Ascending aorta (tissue), 2 donors: ENCODE measurements at regions of chr13 and their contacts with region 1.

Region 1: GRCh38 chr13:114226699-114227323 is 7.9 kb upstream of the CDC16 start:
- DNase-seq: peak; percentile 33 to 93
- H3K4me3 ChIP-seq: no peak overlapping the region
- H3K27ac ChIP-seq: no peak overlapping the region
- H3K4me1 ChIP-seq: no peaks in the 10 kb centered on the region
- H3K27me3 ChIP-seq: no peaks in the 10 kb centered on the region
- CTCF ChIP-seq: peak; percentile 98

Region 2: DNA sequence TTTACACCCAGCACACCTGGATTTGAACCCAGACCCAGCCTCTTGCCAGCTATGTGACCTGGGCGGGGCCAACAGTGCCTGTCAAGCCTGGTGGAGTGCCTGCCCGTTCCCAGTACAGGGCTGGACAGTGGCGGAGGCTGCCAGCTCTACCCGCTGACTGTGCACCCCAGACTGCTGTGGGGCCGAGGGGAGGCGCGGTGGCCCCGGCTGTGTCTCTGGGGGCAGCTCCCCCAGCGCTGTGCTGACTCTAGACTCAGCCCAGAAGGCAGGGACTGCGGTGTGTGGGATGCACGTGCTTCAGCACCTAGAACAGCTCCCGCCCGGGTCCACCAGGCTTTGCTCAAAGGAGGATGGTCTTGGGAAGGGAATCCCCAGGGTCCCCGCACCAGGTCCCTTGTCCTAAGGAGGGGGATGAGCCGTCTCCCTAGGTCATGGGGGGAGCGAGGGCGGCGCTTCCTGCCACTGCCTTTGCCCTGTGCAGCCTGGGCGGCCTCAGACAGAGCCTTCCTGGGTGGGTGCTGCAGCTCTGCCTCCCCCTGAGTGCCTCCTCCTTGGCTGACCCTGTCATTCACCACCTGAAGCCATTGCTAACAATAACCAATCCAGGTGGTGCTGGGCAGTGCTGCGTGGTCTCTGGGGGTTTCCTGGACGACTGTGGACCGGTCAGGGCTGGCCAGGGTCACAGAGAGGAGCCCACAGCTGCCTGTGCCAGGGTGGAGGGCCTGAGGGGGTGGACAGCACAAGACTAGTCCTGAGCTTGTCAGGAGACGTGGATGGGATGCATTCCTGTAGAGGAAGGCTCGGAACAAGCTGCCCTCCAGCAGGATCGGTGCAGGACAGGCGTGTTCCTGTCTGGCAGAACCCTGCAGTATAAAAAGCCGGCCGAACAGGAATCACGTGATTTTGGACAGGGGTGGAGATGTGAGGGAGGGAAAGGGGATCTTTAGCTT is 449.2 kb before region 1 on chr13:
- intact Hi-C with region 1: no loop called
- DNase-seq: no peak
- H3K4me3 ChIP-seq: no peak overlapping the region
- H3K27ac ChIP-seq: no peak overlapping the region
- H3K4me1 ChIP-seq: no peaks in the 10 kb centered on the region
- H3K27me3 ChIP-seq: no peaks in the 10 kb centered on the region
- CTCF ChIP-seq: no peak

Region 3: DNA sequence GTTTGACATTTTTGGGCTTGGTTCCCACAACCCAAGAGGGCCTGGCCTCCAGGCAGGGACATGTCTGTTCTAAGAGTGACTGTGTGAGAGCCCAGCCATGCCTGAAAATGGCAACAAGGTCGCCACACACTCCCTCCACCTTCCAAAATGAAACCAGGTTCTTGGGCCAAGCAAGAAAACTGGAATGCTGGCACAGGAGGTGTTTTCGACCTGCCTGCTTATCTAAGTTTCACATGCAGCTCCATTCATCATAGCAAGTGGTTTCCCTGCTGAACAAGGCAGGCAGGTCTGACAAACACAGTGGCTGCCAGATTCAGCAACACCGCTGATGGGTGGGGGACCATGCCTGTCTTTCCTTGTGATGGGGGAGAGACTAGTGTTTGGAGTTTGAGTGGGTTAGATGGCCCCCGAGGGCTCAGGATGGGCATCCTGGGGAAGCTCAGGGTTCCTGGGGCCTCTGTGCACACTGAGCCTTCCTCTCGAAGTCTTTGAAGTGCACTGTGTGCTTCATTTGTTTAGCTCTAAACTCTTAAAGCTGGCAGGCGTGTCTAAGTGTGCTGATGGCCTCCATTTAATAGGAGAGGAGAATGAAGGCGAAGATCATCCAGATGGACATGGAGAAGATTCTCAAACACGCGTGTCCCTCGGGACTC is 345.1 kb before region 1 on chr13:
- intact Hi-C with region 1: no loop called
- DNase-seq: no peak
- H3K4me3 ChIP-seq: peak overlapping the region in 1 of 2 donors; percentile 17
- H3K27ac ChIP-seq: peak overlapping the region; percentile 88
- H3K4me1 ChIP-seq: peaks cover 5 to 42% of the 10 kb centered on the region in 2 donors
- H3K27me3 ChIP-seq: no peaks in the 10 kb centered on the region
- CTCF ChIP-seq: no peak

Region 4: GRCh38 chr13:113951246-113951999 is 275.4 kb before region 1 on chr13:
- intact Hi-C with region 1: loop called (anchors 1 kb)
- DNase-seq: peak; percentile 30 to 92
- H3K4me3 ChIP-seq: peak overlapping the region in 1 of 2 donors; percentile 41
- H3K27ac ChIP-seq: no peak overlapping the region
- H3K4me1 ChIP-seq: peaks cover 3 to 8% of the 10 kb centered on the region in 2 donors
- H3K27me3 ChIP-seq: no peaks in the 10 kb centered on the region
- CTCF ChIP-seq: peak; percentile 89 to 93 (median 91)